ENCODE measurements at regions of chr7 and their contacts with region 1.

Region 1: GRCh38 chr7:131688738-131689661 is 132.6 kb upstream of the PODXL start:
- DNase-seq: peak; percentile 61
- H3K4me3 ChIP-seq: no peak overlapping the region
- H3K27ac ChIP-seq: no peak overlapping the region
- H3K4me1 ChIP-seq: no peaks in the 10 kb centered on the region
- H3K27me3 ChIP-seq: peaks cover 0 to 2% of the 10 kb centered on the region in 2 experiments
- CTCF ChIP-seq: peak; percentile 89 to 94
- POLR2A ChIP-seq: no peak

Region 2: GRCh38 chr7:130683026-130683425 is 1006.0 kb before region 1 on chr7:
- CTCF ChIA-PET with region 1: no interaction called
- POLR2A ChIA-PET with region 1: no interaction called
- dilution Hi-C with region 1: no loop called
- intact Hi-C with region 1: no loop called
- DNase-seq: no peak
- H3K4me3 ChIP-seq: no peak overlapping the region
- H3K27ac ChIP-seq: no peak overlapping the region
- H3K4me1 ChIP-seq: no peaks in the 10 kb centered on the region
- H3K27me3 ChIP-seq: peaks cover 8 to 13% of the 10 kb centered on the region in 2 experiments
- CTCF ChIP-seq: no peak
- POLR2A ChIP-seq: no peak

Region 3: DNA sequence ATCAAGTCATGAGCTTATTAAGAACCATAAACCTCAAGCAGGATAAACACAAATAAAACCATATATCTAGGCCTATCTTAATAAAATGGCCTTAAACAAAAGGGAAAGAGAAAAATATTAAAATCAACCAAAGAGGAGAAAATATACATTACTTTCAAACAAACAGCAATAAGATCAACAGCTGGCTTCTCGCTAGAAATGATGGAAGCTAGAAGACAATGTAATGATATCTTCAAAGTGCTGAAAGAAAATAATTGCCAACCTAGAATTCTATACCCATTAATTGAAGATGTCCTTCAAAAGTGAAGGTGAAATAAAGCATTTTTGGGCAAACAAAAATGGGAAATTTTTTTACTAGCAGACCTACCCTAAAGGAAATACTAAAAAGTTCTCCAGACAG is 10.3 kb after region 1 on chr7:
- CTCF ChIA-PET with region 1: interaction called, 16 read pairs
- POLR2A ChIA-PET with region 1: no interaction called
- dilution Hi-C with region 1: no loop called
- intact Hi-C with region 1: no loop called
- DNase-seq: no peak
- H3K4me3 ChIP-seq: no peak overlapping the region
- H3K27ac ChIP-seq: no peak overlapping the region
- H3K4me1 ChIP-seq: no peaks in the 10 kb centered on the region
- H3K27me3 ChIP-seq: peaks cover 15 to 27% of the 10 kb centered on the region in 2 experiments
- CTCF ChIP-seq: no peak
- POLR2A ChIP-seq: no peak

Region 4: GRCh38 chr7:132049462-132050304 is 360.7 kb after region 1 on chr7:
- CTCF ChIA-PET with region 1: interaction called, 16 read pairs
- POLR2A ChIA-PET with region 1: no interaction called
- dilution Hi-C with region 1: no loop called
- intact Hi-C with region 1: loop called (anchors 1 kb)
- DNase-seq: peak; percentile 44
- H3K4me3 ChIP-seq: no peak overlapping the region
- H3K27ac ChIP-seq: no peak overlapping the region
- H3K4me1 ChIP-seq: no peaks in the 10 kb centered on the region
- H3K27me3 ChIP-seq: peaks cover 24 to 28% of the 10 kb centered on the region in 2 experiments
- CTCF ChIP-seq: peak; percentile 72 to 75
- POLR2A ChIP-seq: no peak

Region 5: DNA sequence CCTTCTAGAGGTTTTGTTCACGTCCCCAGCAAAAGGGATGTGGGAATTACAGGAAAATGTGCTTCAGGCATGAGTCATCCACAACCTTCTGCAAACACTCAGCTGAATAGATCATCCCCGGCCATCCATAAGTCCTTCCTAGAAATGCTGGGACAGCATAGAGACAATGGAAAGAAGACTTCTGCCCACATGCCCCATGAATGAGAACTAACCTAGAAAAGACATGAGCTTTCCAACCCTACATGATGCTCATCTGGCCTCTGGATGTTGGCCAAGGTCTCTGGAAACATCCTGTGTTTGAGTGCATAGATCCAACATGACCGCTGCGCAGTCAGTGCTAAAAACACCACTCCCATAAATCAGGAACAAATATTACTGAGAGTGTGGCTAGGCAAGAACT is 609.8 kb after region 1 on chr7:
- CTCF ChIA-PET with region 1: no interaction called
- POLR2A ChIA-PET with region 1: no interaction called
- dilution Hi-C with region 1: no loop called
- intact Hi-C with region 1: loop called (anchors 5 kb)
- DNase-seq: peak; percentile 85
- H3K4me3 ChIP-seq: no peak overlapping the region
- H3K27ac ChIP-seq: peak overlapping the region; percentile 44
- H3K4me1 ChIP-seq: peaks cover 37% of the 10 kb centered on the region
- H3K27me3 ChIP-seq: no peaks in the 10 kb centered on the region
- CTCF ChIP-seq: no peak
- POLR2A ChIP-seq: no peak

Measured in endothelial cell of umbilical vein (primary cell).